GM12878 (cell line): ENCODE measurements at regions of chr17 and their contacts with region 1.

Region 1: DNA sequence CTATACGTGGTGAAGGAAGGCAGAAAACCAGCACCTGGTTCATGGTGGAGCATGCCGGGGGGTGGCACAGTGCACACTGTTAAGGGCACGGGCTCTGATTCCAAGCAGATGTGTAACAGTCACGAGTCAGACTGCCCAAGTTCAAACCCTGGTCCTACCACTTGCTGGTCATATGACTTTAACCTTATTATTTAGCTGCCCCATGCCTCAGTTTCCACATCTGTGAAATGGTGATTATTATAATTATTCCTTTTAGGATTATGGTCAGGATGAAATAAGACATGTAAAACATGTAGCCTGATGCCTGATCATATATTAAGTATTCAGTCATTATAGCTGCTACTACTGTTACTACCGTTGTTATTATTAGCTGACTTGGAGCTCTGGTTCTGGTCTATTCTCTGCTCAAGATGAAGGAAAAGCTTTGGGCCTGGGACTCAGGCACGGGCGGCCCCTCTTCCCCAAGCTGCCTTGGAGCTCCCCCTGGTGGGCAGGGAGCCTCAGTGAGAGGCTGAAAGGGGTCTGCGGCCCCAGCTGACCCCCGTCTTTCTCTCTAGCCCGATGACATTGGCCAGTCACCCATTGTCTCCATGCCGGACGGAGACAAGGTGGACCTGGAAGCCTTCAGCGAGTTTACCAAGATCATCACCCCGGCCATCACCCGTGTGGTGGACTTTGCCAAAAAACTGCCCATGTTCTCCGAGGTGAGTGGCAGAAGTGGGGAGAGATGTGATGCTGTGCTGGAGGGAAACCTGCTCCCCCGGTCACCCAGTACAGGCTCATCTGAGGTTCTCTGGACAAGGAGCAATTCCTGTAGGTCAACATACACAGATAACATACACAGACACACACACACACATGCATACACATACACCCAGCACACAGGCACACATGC is 14.0 kb downstream of the NR1D1 start:
- DNase-seq: no peak
- ATAC-seq: peak; percentile 92
- H3K4me3 ChIP-seq: no peak overlapping the region
- H3K27ac ChIP-seq: no peak overlapping the region
- H3K4me1 ChIP-seq: no peaks in the 10 kb centered on the region
- H3K27me3 ChIP-seq: no peaks in the 10 kb centered on the region
- CTCF ChIP-seq: peak; percentile 79 to 89 (median 80)
- EP300 ChIP-seq: no peak
- POLR2A ChIP-seq: no peak
- RAD21 ChIP-seq: peak; percentile 78

Region 2: DNA sequence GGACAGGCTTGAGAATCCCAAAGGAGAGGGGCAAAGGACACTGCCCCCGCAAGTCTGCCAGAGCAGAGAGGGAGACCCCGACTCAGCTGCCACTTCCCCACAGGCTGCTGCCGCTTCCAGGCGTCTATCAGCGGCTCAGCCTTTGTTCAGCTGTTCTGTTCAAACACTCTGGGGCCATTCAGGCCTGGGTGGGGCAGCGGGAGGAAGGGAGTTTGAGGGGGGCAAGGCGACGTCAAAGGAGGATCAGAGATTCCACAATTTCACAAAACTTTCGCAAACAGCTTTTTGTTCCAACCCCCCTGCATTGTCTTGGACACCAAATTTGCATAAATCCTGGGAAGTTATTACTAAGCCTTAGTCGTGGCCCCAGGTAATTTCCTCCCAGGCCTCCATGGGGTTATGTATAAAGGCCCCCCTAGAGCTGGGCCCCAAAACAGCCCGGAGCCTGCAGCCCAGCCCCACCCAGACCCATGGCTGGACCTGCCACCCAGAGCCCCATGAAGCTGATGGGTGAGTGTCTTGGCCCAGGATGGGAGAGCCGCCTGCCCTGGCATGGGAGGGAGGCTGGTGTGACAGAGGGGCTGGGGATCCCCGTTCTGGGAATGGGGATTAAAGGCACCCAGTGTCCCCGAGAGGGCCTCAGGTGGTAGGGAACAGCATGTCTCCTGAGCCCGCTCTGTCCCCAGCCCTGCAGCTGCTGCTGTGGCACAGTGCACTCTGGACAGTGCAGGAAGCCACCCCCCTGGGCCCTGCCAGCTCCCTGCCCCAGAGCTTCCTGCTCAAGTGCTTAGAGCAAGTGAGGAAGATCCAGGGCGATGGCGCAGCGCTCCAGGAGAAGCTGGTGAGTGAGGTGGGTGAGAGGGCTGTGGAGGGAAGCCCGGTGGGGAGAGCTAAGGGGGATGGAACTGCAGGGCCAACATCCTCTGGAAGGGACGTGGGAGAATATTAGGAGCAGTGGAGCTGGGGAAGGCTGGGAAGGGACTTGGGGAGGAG is 71.1 kb before region 1 on chr17 and contains the start of gene CSF3:
- CTCF ChIA-PET with region 1: interaction called, 44 read pairs
- POLR2A ChIA-PET with region 1: no interaction called
- RAD21 ChIA-PET with region 1: interaction called, 9 read pairs
- SMC1A ChIA-PET with region 1: interaction called, 4 read pairs
- in situ Hi-C with region 1: no loop called
- intact Hi-C with region 1: loop called (anchors 1 kb)
- DNase-seq: no peak
- ATAC-seq: 0 out of 3 replicates have a peak, but pooled peaks have one; percentile 16
- H3K4me3 ChIP-seq: no peak within 1 kb of the TSS
- H3K27ac ChIP-seq: no peak within 1 kb of the TSS
- H3K4me1 ChIP-seq: peaks cover 8% of the 10 kb centered on the region
- H3K27me3 ChIP-seq: no peaks in the 10 kb centered on the region
- CTCF ChIP-seq: no peak
- EP300 ChIP-seq: no peak
- POLR2A ChIP-seq: no peak
- RAD21 ChIP-seq: no peak
- polyA plus RNA-seq, gene CSF3: 0.09 TPM in 1 of 2 experiments, not detected in the other

Region 3: GRCh38 chr17:40026816-40027613 is 59.4 kb before region 1 on chr17:
- CTCF ChIA-PET with region 1: interaction called, 11 read pairs
- POLR2A ChIA-PET with region 1: no interaction called
- RAD21 ChIA-PET with region 1: interaction called, 5 read pairs
- SMC1A ChIA-PET with region 1: interaction called, 4 read pairs
- in situ Hi-C with region 1: no loop called
- intact Hi-C with region 1: no loop called
- DNase-seq: peak; percentile 12
- ATAC-seq: peak; percentile 100
- H3K4me3 ChIP-seq: no peak overlapping the region
- H3K27ac ChIP-seq: no peak overlapping the region
- H3K4me1 ChIP-seq: no peaks in the 10 kb centered on the region
- H3K27me3 ChIP-seq: no peaks in the 10 kb centered on the region
- CTCF ChIP-seq: peak; percentile 80 to 88 (median 86)
- EP300 ChIP-seq: no peak
- POLR2A ChIP-seq: no peak
- RAD21 ChIP-seq: peak; percentile 63

Region 4: DNA sequence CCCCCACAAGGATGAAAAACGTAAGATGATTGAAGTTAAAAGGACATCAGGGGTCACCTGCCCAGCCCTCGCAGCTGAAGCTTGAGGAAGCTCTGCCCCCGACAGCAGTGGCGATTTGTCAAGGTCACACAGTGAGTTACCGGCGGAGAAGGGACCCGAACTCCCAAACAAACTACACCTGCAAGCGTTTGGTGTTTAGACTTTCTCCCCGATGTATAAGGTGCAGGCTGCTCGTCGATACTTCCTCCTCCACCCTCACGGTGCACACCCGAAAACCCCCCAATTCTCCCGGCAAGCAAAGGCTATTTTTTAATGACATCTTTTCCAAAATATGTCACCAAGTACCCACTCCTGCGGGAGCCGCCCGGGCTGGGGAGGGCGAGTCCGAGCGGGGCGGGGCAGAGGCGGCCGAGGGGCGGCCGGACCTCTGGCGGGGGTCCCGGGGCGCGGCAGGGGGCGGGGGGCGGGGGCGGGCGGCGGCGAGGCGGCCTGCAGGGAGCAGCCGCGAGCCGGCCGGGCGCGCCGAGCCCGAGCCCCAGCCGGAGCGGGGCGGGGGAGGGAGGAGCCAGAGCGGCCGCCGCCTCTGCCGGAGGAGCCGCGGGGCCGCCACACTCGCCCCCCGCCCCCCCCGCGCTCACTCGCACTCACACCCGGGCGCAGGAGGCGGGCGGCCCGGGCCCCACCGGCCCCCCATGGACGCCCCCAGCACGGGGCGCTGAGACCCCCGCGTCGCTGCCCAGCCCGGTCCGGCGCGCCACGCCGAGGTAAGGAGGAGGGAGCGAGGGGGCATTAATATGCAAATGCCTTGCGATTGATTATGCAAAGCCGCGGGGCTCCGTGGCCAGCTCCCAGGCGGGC is 23.8 kb before region 1 on chr17 and contains the start of gene THRA:
- CTCF ChIA-PET with region 1: interaction called, 13 read pairs
- POLR2A ChIA-PET with region 1: interaction called, 5 read pairs
- RAD21 ChIA-PET with region 1: interaction called, 6 read pairs
- SMC1A ChIA-PET with region 1: interaction called, 4 read pairs
- in situ Hi-C with region 1: no loop called
- intact Hi-C with region 1: no loop called
- DNase-seq: no peak
- ATAC-seq: peak; percentile 89
- H3K4me3 ChIP-seq: peak within 1 kb of the TSS; percentile 93
- H3K27ac ChIP-seq: no peak within 1 kb of the TSS
- H3K4me1 ChIP-seq: peaks cover 5% of the 10 kb centered on the region
- H3K27me3 ChIP-seq: peaks cover 10 to 11% of the 10 kb centered on the region in 2 experiments; a peak in 3 of 4 replicates
- CTCF ChIP-seq: peak in 1 of 3 experiments; percentile 27; a peak in 2 of 6 replicates
- EP300 ChIP-seq: no peak
- POLR2A ChIP-seq: no peak
- RAD21 ChIP-seq: no peak
- polyA plus RNA-seq, gene THRA: 0.03 to 0.07 TPM

Region 5: DNA sequence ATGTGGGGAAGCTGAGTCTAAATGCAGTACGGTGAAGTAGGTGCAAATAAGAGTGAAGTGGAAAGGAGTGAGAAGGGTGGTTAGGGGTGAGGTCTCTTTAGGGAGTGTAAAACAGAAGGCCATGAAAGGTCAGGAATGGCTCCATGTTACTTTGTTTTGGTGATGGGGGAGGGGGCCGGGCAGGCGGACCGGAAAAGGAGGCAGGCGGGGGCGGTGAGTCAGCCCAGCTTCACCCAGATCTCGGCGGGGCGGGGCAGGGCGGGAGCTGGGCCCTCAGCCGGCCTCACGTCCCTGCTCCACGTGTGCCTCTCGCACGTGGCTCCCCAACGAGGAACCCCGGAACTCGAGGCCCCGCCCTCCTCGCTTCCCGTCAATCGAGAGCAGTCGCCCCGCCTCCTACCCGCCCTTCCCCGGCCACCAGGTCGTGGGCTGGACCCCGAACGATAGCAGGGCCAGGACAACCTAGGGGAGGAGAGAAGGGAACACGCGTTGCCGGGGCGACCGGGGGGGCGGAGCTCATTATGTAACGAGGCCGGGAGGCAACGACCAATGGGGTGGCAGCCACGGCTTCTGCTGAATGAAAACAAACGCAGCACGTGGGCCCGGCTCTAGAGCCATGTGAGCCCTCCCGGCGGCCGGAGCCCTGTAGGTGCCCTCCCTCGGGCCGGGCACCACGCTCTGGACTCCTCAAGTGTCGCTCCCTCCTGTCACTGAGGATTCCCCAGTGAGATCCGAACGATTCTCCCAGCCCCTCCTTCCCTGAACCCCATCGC is 12.6 kb after region 1 on chr17:
- CTCF ChIA-PET with region 1: interaction called, 13 read pairs
- POLR2A ChIA-PET with region 1: interaction called, 4 read pairs
- RAD21 ChIA-PET with region 1: no interaction called
- SMC1A ChIA-PET with region 1: no interaction called
- in situ Hi-C with region 1: no loop called
- intact Hi-C with region 1: no loop called
- DNase-seq: peak; percentile 97
- ATAC-seq: peak; percentile 80
- H3K4me3 ChIP-seq: peak overlapping the region; percentile 90
- H3K27ac ChIP-seq: peak overlapping the region; percentile 88
- H3K4me1 ChIP-seq: peaks cover 64% of the 10 kb centered on the region
- H3K27me3 ChIP-seq: no peaks in the 10 kb centered on the region
- CTCF ChIP-seq: no peak
- EP300 ChIP-seq: no peak
- POLR2A ChIP-seq: no peak; the same call in 1 of the 2 replicates
- RAD21 ChIP-seq: no peak

Region 6: DNA sequence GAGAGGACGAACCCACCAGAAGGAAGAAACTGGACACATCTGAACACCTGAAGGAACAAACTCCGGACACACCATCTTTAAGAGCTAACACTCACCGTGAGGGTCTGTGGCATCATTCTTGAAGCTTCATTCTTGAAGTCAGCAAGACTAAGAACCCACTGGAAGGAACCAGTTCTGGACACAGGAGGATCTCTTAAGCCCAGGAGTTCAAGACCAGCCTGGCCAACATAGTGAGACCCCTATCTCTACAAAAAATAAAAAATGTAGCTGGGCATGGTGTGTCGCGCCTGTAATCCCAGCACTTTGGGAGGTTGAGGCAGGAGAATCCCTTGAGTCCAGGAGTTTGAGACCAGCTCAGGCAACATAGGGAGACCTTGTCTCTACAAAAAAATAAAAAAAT is 112.2 kb after region 1 on chr17:
- CTCF ChIA-PET with region 1: no interaction called
- POLR2A ChIA-PET with region 1: no interaction called
- RAD21 ChIA-PET with region 1: no interaction called
- SMC1A ChIA-PET with region 1: no interaction called
- in situ Hi-C with region 1: no loop called
- intact Hi-C with region 1: no loop called
- DNase-seq: no peak
- ATAC-seq: no peak
- H3K4me3 ChIP-seq: no peak overlapping the region
- H3K27ac ChIP-seq: no peak overlapping the region
- H3K4me1 ChIP-seq: peaks cover 13% of the 10 kb centered on the region
- H3K27me3 ChIP-seq: no peaks in the 10 kb centered on the region
- CTCF ChIP-seq: no peak
- EP300 ChIP-seq: no peak
- POLR2A ChIP-seq: no peak
- RAD21 ChIP-seq: no peak